BJ (cell line): ENCODE measurements at regions of chr9 and their contacts with region 1.

Region 1: GRCh38 chr9:14271093-14271673 is 42.8 kb downstream of the NFIB start:
- DNase-seq: no peak
- H3K4me3 ChIP-seq: no peak overlapping the region
- H3K27me3 ChIP-seq: no peaks in the 10 kb centered on the region
- CTCF ChIP-seq: no peak

Region 2: DNA sequence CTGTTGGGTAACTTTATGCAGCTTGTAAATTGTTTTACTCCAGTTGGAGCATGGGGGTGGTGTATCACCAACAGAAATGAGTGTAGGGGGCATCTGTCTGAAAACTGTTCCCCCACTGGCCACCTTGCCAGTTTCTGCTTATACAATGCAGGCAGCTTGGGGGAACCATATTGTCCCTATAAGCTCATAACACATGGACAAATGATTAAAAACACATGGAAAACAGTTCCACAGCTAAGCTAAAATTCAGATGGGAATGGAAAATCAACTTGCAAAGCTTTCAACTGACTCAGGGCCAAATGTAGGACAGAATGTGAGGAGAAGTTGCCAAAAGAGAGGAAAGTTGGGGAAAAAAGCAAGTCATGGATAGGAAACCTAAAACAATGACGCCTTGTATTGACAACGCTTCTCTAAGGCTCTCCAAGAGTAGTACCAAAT is 459.3 kb after region 1 on chr9:
- CTCF ChIA-PET with region 1: no interaction called
- POLR2A ChIA-PET with region 1: interaction called, 21 read pairs
- DNase-seq: no peak
- H3K4me3 ChIP-seq: no peak overlapping the region
- H3K27me3 ChIP-seq: no peaks in the 10 kb centered on the region
- CTCF ChIP-seq: no peak

Region 3: DNA sequence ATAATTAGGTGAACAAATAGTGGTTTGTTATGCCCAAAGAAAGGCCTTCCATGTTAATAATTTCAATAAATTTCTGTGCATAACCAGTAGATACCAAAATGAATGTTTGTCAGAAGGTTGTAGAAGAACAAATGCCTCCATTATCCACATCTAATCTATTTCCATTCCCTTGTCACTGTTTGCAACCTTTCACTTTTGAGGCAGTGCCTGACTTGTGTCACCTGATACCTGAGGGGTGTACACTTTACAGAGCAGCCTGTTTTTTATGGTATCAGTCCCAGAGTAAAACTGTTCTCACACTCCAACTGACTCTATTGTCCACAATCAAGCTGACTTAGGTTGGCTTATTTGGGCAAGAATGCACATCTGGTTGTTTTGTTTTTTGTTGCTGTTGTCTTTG is 598.9 kb after region 1 on chr9:
- CTCF ChIA-PET with region 1: no interaction called
- POLR2A ChIA-PET with region 1: no interaction called
- DNase-seq: no peak
- H3K4me3 ChIP-seq: no peak overlapping the region
- H3K27me3 ChIP-seq: no peaks in the 10 kb centered on the region
- CTCF ChIP-seq: no peak